ENCODE measurements at regions of chr19 and their contacts with region 1.

Region 1: GRCh38 chr19:35557539-35558399 is 5.7 kb downstream of the ATP4A start:
- DNase-seq: peak; percentile 100
- ATAC-seq: peak; percentile 86
- H3K4me3 Mint-ChIP-seq: peak overlapping the region; percentile 87
- H3K27ac Mint-ChIP-seq: peak overlapping the region; percentile 55; the same call in 1 of the 2 replicates
- H3K4me1 Mint-ChIP-seq: peaks cover 12% of the 10 kb centered on the region
- H3K27me3 Mint-ChIP-seq: peaks cover 55% of the 10 kb centered on the region
- CTCF ChIP-seq: no peak

Region 2: DNA sequence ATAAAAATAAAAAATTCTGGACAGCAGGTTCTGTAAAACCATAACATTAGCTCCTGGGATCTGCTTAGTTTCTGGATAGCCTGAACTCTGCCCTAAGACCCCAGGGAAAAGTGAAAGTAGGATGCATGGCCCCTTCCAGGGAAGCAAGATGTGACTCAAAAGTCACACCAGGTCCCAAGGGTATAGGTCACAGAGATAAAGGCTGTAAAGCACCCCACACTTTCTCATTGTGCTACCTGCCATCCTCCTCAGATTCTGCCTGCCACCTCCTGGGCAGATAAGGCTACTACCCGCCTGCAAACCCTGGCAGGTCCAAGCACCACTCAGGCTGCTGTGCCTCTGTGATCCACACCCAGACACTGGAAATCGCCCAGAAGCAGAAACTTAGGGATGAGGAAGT is 89.1 kb before region 1 on chr19:
- CTCF ChIA-PET with region 1: no interaction called
- POLR2A ChIA-PET with region 1: no interaction called
- DNase-seq: peak; percentile 60
- ATAC-seq: peak; percentile 98
- H3K4me3 Mint-ChIP-seq: no peak overlapping the region
- H3K27ac Mint-ChIP-seq: no peak overlapping the region
- H3K4me1 Mint-ChIP-seq: peaks cover 13% of the 10 kb centered on the region
- H3K27me3 Mint-ChIP-seq: no peaks in the 10 kb centered on the region
- CTCF ChIP-seq: peak; percentile 42; the same call in 1 of the 2 replicates

Region 3: DNA sequence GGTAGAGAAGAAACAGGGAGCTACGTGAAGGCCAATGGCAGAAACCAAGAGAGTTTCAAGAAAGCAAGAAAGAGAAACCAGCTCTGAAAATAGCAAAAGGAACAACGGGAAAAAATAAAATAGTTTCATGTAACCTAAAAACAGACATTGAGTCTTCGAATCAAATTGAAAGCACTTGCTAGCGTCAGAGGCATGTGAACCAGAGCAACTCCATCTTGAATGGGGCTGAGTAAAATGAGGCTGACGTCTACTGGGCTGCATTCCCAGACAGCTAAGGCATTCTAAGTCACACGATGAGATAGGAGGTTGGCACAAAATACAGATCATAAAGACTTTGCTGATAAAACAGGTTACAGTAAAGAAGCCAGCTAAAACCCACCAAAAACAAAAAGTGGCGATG is 20.9 kb after region 1 on chr19:
- CTCF ChIA-PET with region 1: no interaction called
- POLR2A ChIA-PET with region 1: no interaction called
- DNase-seq: no peak
- ATAC-seq: no peak
- H3K4me3 Mint-ChIP-seq: no peak overlapping the region
- H3K27ac Mint-ChIP-seq: no peak overlapping the region
- H3K4me1 Mint-ChIP-seq: no peaks in the 10 kb centered on the region
- H3K27me3 Mint-ChIP-seq: peaks cover 48% of the 10 kb centered on the region
- CTCF ChIP-seq: no peak

Region 4: DNA sequence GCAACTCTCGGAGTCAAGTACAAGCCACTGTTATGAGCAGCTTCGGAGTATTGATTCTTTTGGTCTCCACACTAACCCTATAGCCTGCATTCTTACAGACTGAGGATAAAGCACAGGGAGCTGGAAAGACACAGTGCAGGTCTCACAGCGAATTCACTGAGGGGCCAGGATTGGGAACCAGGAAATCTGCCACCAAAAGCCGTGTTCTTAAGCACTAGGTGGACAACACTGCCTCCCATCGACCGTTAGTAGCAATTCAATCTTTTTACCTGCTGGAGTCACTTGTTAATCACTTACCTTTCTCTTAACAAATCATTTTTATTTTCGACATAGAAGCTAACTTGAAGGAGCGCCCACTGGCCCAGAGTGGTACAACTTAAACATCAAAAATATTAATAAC is 34.5 kb after region 1 on chr19:
- CTCF ChIA-PET with region 1: interaction called, 20 read pairs
- POLR2A ChIA-PET with region 1: interaction called, 3 read pairs
- DNase-seq: peak; percentile 40
- ATAC-seq: peak; percentile 78
- H3K4me3 Mint-ChIP-seq: no peak overlapping the region
- H3K27ac Mint-ChIP-seq: no peak overlapping the region; the same call in 1 of the 2 replicates
- H3K4me1 Mint-ChIP-seq: no peaks in the 10 kb centered on the region
- H3K27me3 Mint-ChIP-seq: peaks cover 19% of the 10 kb centered on the region
- CTCF ChIP-seq: peak; percentile 43; the same call in 1 of the 2 replicates

Region 5: DNA sequence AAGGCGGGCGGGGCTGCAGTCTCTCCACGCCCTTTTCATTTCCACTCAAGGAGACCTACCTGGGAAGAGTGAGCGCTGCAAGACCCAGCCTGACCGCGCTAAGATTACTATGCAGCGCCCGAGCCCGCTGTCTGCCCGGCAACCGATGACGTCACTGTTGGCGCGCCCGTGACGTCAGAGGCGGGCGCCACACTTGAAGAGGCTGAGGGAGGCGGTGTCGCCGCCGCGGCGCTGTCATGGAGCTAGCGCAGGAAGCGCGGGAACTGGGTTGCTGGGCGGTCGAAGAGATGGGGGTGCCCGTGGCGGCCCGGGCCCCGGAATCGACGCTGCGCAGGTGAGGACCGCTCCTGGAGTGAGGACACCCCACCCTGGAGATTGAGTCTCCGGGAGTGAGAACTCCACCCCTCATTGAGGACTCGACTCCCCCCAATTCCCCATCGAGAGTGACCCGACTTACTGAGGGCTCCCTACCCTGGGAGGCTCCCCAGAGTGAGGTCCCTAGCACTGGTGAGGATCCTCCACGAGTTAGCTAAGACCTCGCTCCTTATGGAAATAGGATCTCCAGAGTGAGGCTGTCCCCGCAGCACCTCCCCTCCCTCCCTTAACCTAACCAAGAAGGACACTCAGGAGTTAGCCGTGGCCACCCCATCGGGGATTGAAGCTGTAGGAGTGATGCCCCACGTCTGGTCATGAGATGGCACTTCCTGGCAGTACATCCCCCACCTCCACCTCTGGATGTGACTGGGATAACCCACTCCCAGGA is 55.0 kb after region 1 on chr19 and contains the start of gene HAUS5:
- CTCF ChIA-PET with region 1: interaction called, 35 read pairs
- POLR2A ChIA-PET with region 1: interaction called, 7 read pairs
- DNase-seq: peak; percentile 96
- ATAC-seq: peak; percentile 94
- H3K4me3 Mint-ChIP-seq: peak within 1 kb of the TSS; percentile 76
- H3K27ac Mint-ChIP-seq: peak within 1 kb of the TSS; percentile 38; the same call in 1 of the 2 replicates
- H3K4me1 Mint-ChIP-seq: no peaks in the 10 kb centered on the region
- H3K27me3 Mint-ChIP-seq: peaks cover 29% of the 10 kb centered on the region
- CTCF ChIP-seq: no peak
- total RNA-seq, gene HAUS5: 23.5 to 25.4 TPM (median 24.4 TPM) in 3 replicates

Region 6: GRCh38 chr19:35618857-35619256 is 61.1 kb after region 1 on chr19:
- CTCF ChIA-PET with region 1: interaction called, 35 read pairs
- POLR2A ChIA-PET with region 1: no interaction called
- DNase-seq: peak; percentile 52
- ATAC-seq: peak; percentile 77
- H3K4me3 Mint-ChIP-seq: no peak overlapping the region
- H3K27ac Mint-ChIP-seq: no peak overlapping the region
- H3K4me1 Mint-ChIP-seq: no peaks in the 10 kb centered on the region
- H3K27me3 Mint-ChIP-seq: no peaks in the 10 kb centered on the region
- CTCF ChIP-seq: no peak

Region 7: GRCh38 chr19:35644206-35644986 is 86.6 kb after region 1 on chr19:
- CTCF ChIA-PET with region 1: interaction called, 19 read pairs
- POLR2A ChIA-PET with region 1: interaction called, 14 read pairs
- DNase-seq: peak; percentile 98
- ATAC-seq: peak; percentile 83
- H3K4me3 Mint-ChIP-seq: peak overlapping the region; percentile 84
- H3K27ac Mint-ChIP-seq: peak overlapping the region; percentile 93
- H3K4me1 Mint-ChIP-seq: peaks cover 29% of the 10 kb centered on the region
- H3K27me3 Mint-ChIP-seq: peaks cover 17% of the 10 kb centered on the region
- CTCF ChIP-seq: no peak

Region 8: DNA sequence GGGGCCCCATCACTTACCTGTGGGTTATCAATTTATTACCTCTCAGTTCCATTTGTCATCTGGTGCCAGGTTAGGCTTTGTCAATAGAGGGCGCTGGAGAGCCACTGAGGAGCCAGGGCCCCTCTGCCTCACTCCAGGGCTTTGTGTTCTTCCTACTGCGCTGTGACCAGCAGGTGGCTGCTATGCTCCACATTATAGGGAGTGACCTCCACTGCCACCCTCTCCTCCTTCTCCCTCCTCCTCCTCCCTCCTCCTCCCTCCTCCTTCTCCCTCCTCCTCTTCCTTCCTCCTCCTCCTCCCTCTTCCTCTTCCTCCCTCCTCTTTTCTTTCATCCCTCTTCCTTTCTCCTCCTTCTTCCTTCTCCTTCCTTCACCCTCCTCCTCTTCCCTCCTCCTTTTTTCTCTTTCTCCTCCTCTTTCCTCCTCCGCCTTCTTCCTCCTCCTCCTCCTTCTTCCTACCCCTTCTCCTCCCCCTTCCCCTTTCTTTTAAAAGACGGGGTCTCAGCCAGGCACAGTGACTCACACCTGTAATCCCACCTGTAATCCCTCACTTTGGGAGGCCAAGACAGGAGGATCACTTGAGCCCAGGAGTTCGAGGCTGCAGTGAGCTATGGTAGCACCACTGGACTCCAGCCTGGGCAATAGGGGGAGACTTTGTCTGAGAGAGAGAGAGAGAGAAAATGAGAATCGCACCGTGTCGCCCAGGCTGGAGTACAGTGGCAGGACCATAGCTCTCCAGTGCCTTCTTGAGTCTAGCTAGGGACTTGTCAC is 136.2 kb after region 1 on chr19:
- CTCF ChIA-PET with region 1: interaction called, 13 read pairs
- POLR2A ChIA-PET with region 1: no interaction called
- DNase-seq: peak; percentile 93
- ATAC-seq: peak; percentile 96
- H3K4me3 Mint-ChIP-seq: no peak overlapping the region
- H3K27ac Mint-ChIP-seq: no peak overlapping the region
- H3K4me1 Mint-ChIP-seq: no peaks in the 10 kb centered on the region; the same call in 1 of the 2 replicates
- H3K27me3 Mint-ChIP-seq: peaks cover 6% of the 10 kb centered on the region
- CTCF ChIP-seq: peak; percentile 94

Region 9: GRCh38 chr19:35702223-35703012 is 144.6 kb after region 1 on chr19:
- CTCF ChIA-PET with region 1: interaction called, 13 read pairs
- POLR2A ChIA-PET with region 1: interaction called, 4 read pairs
- DNase-seq: peak; percentile 96
- ATAC-seq: peak; percentile 96
- H3K4me3 Mint-ChIP-seq: peak overlapping the region; percentile 85
- H3K27ac Mint-ChIP-seq: peak overlapping the region; percentile 98
- H3K4me1 Mint-ChIP-seq: no peaks in the 10 kb centered on the region; the same call in 1 of the 2 replicates
- H3K27me3 Mint-ChIP-seq: peaks cover 44% of the 10 kb centered on the region
- CTCF ChIP-seq: no peak

Measured in WTC11 (cell line).